ENCODE measurements at regions of chr1 and their contacts with region 1.

Region 1: GRCh38 chr1:243325305-243325890 is 69.6 kb downstream of the SDCCAG8 start:
- DNase-seq: peak; percentile 80
- H3K4me3 Mint-ChIP-seq: no peak overlapping the region
- H3K27ac Mint-ChIP-seq: no peak overlapping the region
- H3K4me1 Mint-ChIP-seq: no peaks in the 10 kb centered on the region
- H3K27me3 Mint-ChIP-seq: no peaks in the 10 kb centered on the region

Region 2: DNA sequence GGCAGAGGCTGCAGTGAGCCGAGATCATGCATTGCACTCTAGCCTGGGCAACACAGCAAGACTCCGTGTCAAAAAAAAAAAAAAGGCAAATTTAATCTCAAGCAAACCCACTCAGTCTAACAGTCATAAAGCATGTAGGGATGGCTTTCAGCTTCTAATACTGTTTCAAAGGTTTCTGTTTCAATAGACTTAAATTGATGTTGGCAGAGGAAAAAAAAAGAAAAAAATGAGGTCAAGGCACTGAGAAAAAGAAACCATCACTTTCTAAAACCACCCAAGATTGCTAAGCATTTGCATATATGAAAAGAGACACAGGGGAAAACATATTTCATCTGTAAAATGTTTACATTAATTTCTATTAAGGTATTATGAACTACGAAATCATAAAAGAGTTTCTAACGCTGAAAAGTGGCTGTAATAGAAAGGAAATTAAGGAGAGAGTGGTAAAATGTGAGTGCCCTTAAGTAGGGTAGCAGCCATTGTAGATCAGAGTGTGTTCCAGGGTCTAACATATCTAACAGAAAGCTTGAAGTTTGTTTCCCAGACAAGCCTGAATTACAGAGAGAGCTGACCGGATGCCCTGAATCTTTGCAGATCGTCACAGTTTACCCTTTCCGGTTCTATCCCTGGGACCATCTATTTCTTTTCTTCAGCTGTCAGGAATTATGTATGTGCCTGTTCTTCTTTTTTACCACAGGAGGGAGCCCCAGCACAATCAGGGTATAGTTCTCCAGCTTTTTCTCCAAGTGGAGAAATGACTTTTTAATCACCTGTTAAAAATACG is 870.9 kb before region 1 on chr1:
- intact Hi-C with region 1: loop called (anchors 5 kb)
- DNase-seq: no peak
- H3K4me3 Mint-ChIP-seq: no peak overlapping the region
- H3K27ac Mint-ChIP-seq: no peak overlapping the region
- H3K4me1 Mint-ChIP-seq: no peaks in the 10 kb centered on the region
- H3K27me3 Mint-ChIP-seq: no peaks in the 10 kb centered on the region

Region 3: GRCh38 chr1:242467556-242468145 is 857.7 kb before region 1 on chr1:
- intact Hi-C with region 1: loop called (anchors 5 kb)
- DNase-seq: peak; percentile 59
- H3K4me3 Mint-ChIP-seq: no peak overlapping the region
- H3K27ac Mint-ChIP-seq: no peak overlapping the region
- H3K4me1 Mint-ChIP-seq: no peaks in the 10 kb centered on the region
- H3K27me3 Mint-ChIP-seq: no peaks in the 10 kb centered on the region

Region 4: DNA sequence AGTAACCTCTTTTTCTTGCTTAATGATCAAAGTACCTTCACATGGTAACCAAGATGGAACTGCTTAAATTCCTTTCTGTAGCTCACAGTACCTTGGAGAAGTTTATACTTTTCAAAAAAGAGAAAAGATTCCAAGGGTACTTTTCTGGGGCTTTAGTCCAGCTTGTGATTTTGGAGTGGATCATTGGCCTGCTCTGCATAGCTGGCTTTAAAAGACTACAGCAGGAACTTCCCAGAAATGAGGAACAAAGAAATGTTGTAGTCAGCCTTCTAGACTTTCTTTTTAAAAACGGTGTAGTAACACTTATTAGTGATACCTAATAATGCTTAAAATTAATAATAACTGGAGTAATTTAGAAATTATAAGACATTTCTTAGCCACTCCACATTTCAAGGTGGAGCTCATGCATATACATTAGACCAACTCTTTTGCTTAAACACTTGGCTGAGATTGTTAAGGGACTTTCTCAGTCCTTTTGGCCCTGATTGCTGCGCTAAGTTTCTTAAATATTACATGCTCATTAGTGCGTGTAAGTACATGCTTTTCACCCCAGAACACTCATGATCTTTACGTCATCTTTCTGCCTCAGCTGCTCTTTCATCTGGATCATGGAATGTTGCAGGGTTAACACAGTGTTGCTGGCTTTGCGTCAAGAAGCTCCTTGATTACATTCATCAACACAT is 12.3 kb before region 1 on chr1:
- intact Hi-C with region 1: no loop called
- DNase-seq: no peak
- H3K4me3 Mint-ChIP-seq: no peak overlapping the region
- H3K27ac Mint-ChIP-seq: no peak overlapping the region
- H3K4me1 Mint-ChIP-seq: peaks cover 6% of the 10 kb centered on the region
- H3K27me3 Mint-ChIP-seq: no peaks in the 10 kb centered on the region

Measured in activated CD4-positive, alpha-beta T cell treated with anti-CD3 and anti-CD28 coated beads, Interleukin-2, amount 10 ng/mL, durations not matched to agents 24 days and 14 days (primary cell).